Stomach (tissue), 19 donors: ENCODE measurements at regions of chr1 and their contacts with region 1.

Region 1: DNA sequence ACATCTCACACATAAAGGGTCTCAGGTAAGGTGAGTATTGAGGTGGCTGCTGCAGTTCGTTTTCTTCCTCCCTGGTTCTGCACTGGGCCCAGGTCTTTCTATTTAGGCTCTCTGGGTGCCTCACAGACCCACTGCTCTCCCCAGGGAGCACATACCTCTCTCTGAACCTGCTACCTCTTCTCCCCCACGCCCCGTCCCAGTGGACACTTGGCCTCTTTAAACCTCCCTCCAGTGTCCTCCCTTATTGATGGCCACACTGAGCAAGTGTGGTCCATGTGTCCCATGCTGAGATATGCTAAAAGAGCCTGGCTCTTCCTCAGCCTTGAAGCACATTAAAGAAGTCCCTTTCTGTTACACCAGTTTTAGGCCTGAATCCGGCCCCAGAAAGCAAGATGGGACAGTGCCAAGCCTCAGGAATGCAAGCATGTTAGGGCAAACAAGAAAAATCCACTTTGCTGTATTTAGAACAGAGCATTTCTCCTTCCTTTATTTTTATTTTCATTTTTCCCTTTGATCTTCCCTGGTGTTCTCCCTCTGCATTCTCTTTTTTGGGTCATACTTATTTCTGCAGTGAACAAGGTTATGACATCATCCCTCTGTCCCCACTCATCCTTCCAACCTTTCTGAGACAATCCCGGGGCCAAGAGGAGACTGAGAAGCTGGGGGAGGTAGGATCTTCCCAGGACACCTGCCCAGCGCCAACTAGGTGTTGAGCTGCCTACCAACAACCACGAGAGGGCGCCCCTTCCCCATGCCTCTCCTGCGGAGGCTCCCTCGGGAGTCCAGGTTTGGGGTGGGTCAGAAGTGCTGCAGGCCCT is 5.0 kb upstream of the CHI3L2 start:
- DNase-seq: peak; percentile 84 to 86
- H3K4me3 ChIP-seq: no peak overlapping the region
- H3K27ac ChIP-seq: peak overlapping the region in 3 of 5 donors; percentile 29 to 44 (median 38)
- H3K4me1 ChIP-seq: peaks cover 16 to 59% (median 22%) of the 10 kb centered on the region in 4 donors
- H3K27me3 ChIP-seq: no peaks in the 10 kb centered on the region
- CTCF ChIP-seq: peak in 5 of 7 experiments; percentile 84 to 94 (median 89)
- EP300 ChIP-seq: no peak
- POLR2A ChIP-seq: no peak

Region 2: DNA sequence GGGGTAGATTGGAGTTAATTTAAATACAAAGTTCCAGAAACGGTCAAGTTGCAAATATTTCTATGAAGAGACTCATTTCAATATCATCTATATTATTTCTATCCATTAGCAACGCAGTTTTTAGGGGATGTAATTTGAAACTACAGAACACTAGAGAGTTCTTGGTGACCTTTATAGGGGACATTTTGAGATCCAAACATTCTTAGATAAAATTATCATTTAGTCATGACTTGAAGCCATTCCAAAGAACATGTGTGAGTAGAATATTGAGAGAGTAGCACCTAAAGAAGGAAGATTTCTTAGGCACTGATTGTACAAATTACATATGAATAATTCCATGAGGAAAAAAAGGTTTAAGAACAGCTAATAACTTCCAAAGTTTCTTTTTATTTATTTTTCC is 87.2 kb after region 1 on chr1:
- intact Hi-C with region 1: no loop called
- DNase-seq: no peak
- H3K4me3 ChIP-seq: no peak overlapping the region
- H3K27ac ChIP-seq: peak overlapping the region in 1 of 5 donors; percentile 16
- H3K4me1 ChIP-seq: peaks cover 0 to 4% (median 0%) of the 10 kb centered on the region in 4 donors
- H3K27me3 ChIP-seq: no peaks in the 10 kb centered on the region
- CTCF ChIP-seq: no peak
- EP300 ChIP-seq: no peak
- POLR2A ChIP-seq: no peak

Region 3: GRCh38 chr1:111334169-111334568 is 111.7 kb after region 1 on chr1:
- intact Hi-C with region 1: loop called (anchors 10 kb)
- DNase-seq: peak; percentile 53 to 59
- H3K4me3 ChIP-seq: no peak overlapping the region
- H3K27ac ChIP-seq: no peak overlapping the region
- H3K4me1 ChIP-seq: no peaks in the 10 kb centered on the region
- H3K27me3 ChIP-seq: no peaks in the 10 kb centered on the region
- CTCF ChIP-seq: peak in 4 of 7 experiments; percentile 27 to 81 (median 48)
- EP300 ChIP-seq: no peak
- POLR2A ChIP-seq: no peak

Region 4: GRCh38 chr1:111399792-111400610 is 177.5 kb after region 1 on chr1:
- intact Hi-C with region 1: loop called (anchors 5 kb)
- DNase-seq: peak; percentile 63 to 73
- H3K4me3 ChIP-seq: no peak overlapping the region
- H3K27ac ChIP-seq: no peak overlapping the region
- H3K4me1 ChIP-seq: peaks cover 0 to 12% (median 4%) of the 10 kb centered on the region in 4 donors
- H3K27me3 ChIP-seq: peaks cover 0 to 8% (median 0%) of the 10 kb centered on the region in 3 donors
- CTCF ChIP-seq: peak in 5 of 7 experiments; percentile 55 to 77 (median 69)
- EP300 ChIP-seq: no peak
- POLR2A ChIP-seq: no peak